Adrenal gland (tissue), 19 donors: ENCODE measurements at regions of chr11 and their contacts with region 1.

Region 1: DNA sequence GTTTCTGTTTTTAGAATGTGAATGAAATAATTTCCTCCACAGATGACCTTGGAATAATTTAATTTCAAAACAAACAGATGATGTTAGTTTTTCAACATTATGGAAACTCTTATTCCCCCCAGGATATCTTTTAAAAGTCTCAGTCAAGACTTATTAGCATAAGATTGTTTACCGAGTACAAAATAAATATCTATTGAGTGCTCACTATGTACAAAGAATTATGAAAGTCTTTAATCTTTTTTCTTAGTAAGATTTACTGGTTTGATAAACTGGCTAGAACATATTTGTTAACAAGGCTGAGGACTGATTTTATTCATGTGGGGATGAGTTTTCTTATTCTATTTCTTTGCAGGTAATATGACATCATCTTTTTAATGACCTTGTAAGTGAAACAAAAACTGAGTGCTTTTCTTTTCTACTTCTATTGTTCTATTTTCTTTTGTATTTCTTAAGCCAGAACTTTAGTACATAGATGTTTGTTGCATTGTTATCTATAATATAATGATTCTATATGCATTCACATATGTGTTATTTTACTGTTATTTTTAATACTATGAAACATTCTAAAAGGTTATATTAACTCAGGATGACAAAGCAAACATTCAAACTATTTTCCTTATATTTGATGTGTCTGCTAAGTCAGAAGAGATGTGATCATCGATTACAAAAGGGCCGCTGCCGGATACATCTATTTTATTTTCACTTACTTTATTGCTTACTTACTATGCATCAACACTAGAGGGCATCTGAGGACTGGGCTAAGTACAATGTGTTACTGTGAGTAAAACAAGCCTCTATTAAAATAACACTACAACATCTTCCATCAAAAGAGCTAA is 111.0 kb upstream of the ARHGAP42 start:
- DNase-seq: peak in 6 of 7 donors; percentile 16 to 42 (median 23)
- H3K4me3 ChIP-seq: no peak overlapping the region
- H3K27ac ChIP-seq: no peak overlapping the region
- H3K4me1 ChIP-seq: no peaks in the 10 kb centered on the region
- H3K27me3 ChIP-seq: no peaks in the 10 kb centered on the region
- CTCF ChIP-seq: peak; percentile 59 to 86 (median 79)
- POLR2A ChIP-seq: no peak

Region 2: DNA sequence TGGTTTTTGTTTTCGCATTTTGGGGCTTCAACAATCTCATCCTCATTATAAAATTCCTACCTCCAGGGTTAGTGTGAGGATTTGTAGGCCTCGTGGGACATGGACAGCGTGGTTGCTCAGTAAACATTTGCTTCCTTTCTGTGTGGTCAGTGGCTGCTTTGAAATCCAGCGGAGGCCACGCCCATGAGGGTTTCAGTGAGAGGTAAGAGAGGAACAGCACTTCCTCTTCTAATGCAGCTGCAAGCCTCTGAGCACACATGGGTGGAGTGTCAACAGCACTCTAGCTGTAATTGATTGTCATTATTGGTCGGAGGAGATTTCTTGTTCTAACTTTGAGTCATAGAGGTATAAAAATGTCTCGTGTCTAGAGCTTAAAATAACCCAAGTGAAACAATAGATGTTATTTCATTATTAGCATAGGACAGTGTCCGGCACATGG is 105.0 kb after region 1 on chr11:
- intact Hi-C with region 1: loop called in 1 of 2 experiments (anchors 5 kb)
- DNase-seq: peak in 6 of 7 donors; percentile 29 to 76 (median 38)
- H3K4me3 ChIP-seq: no peak overlapping the region
- H3K27ac ChIP-seq: no peak overlapping the region
- H3K4me1 ChIP-seq: no peaks in the 10 kb centered on the region
- H3K27me3 ChIP-seq: no peaks in the 10 kb centered on the region
- CTCF ChIP-seq: no peak
- POLR2A ChIP-seq: no peak

Region 3: DNA sequence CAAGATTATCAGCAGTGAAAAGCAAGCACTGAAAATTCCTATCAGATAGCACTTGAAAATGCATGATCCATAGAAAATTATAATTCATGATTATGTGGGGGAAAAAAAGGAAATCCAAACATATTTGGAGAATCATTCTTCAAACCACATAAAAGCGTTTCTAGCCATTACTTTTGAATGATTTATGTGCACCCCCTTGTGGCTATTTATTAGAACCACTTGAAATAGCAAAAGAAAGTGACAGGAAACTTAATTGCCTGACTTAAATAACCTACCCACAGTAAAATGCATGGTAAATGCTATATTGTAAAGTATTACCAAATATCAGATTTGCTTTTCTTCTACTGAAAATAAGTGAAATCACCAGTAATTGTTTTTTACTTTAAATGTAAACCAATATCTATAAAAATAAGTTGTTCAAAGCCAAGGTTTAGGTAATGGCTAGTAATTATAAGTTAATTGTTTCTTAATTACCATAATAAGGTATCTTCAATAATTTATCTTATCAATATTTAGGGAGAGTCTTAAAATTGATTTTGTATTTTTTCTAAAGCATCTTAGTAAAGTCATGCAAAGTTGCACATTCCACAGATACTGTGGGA is 279.5 kb after region 1 on chr11:
- intact Hi-C with region 1: loop called in 1 of 2 experiments (anchors 5 kb)
- DNase-seq: no peak
- H3K4me3 ChIP-seq: no peak overlapping the region
- H3K27ac ChIP-seq: no peak overlapping the region
- H3K4me1 ChIP-seq: peaks cover 0 to 6% of the 10 kb centered on the region in 2 donors
- H3K27me3 ChIP-seq: no peaks in the 10 kb centered on the region
- CTCF ChIP-seq: peak; percentile 51 to 81 (median 64)
- POLR2A ChIP-seq: no peak